ENCODE measurements at regions of chr5 and their contacts with region 1.

Region 1: GRCh38 chr5:140632150-140633020 is 590 bp downstream of the CD14 start:
- DNase-seq: peak; percentile 25 to 80 (median 47)
- ATAC-seq: peak; percentile 79
- H3K4me3 ChIP-seq: peak overlapping the region; percentile 72
- H3K4me3 Mint-ChIP-seq: peak overlapping the region; percentile 91
- H3K27ac ChIP-seq: no peak overlapping the region
- H3K27ac Mint-ChIP-seq: peak overlapping the region; percentile 79
- H3K4me1 ChIP-seq: peaks cover 23% of the 10 kb centered on the region
- H3K4me1 Mint-ChIP-seq: peaks cover 24% of the 10 kb centered on the region
- H3K27me3 ChIP-seq: no peaks in the 10 kb centered on the region
- H3K27me3 Mint-ChIP-seq: no peaks in the 10 kb centered on the region
- CTCF ChIP-seq: no peak

Region 2: GRCh38 chr5:140372971-140373487 is 259.4 kb before region 1 on chr5:
- CTCF ChIA-PET with region 1: no interaction called
- POLR2A ChIA-PET with region 1: no interaction called
- intact Hi-C with region 1: loop called (anchors 1 to 2 kb)
- DNase-seq: peak in 11 of 14 experiments; percentile 10 to 65 (median 22)
- ATAC-seq: peak; percentile 66
- H3K4me3 ChIP-seq: no peak overlapping the region
- H3K4me3 Mint-ChIP-seq: no peak overlapping the region
- H3K27ac ChIP-seq: no peak overlapping the region
- H3K27ac Mint-ChIP-seq: no peak overlapping the region
- H3K4me1 ChIP-seq: peaks cover 5% of the 10 kb centered on the region
- H3K4me1 Mint-ChIP-seq: no peaks in the 10 kb centered on the region
- H3K27me3 ChIP-seq: no peaks in the 10 kb centered on the region
- H3K27me3 Mint-ChIP-seq: no peaks in the 10 kb centered on the region
- CTCF ChIP-seq: peak; percentile 83

Region 3: DNA sequence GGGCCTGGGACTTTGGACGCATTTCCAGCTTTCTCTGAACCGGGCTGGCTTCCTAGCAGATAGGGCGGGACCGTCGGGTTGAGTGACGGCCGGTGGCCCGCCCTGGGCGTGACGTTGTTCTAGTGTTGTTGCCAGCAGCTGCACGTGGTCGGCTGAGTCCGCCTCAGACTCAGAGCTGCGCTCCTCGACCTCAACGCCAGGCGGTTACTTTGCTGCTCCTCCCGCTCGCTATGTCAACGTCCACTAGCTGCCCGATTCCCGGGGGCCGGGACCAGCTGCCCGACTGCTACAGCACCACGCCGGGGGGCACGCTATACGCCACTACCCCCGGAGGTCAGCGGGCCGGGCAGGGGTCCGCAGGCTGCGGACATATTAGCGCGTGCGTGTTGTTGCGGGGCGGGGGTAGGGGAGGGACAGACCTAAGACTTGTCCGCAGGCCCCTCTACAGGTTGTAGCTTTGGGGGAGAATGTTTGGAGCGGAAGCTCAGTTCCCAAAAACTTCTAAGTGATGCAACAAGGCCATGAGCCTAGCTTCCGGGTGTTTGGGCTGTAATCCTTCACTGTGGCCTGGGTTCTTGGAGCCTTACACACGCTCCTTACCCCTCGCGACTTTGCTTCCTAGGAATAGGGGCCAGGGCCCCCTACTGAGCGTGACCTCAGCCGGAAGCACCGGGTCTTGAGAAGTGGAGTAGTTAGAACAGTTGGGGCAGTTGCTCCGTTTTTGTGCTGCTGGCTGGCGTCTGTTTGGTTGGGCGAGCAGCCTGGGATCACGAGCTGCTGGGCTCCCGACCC is 84.7 kb before region 1 on chr5 and contains the start of gene EIF4EBP3:
- CTCF ChIA-PET with region 1: interaction called, 18 read pairs
- POLR2A ChIA-PET with region 1: interaction called, 34 read pairs
- intact Hi-C with region 1: loop called in 1 of 2 experiments (anchors 5 kb)
- DNase-seq: peak; percentile 79 to 95 (median 86)
- ATAC-seq: peak; percentile 97
- H3K4me3 ChIP-seq: peak within 1 kb of the TSS; percentile 79
- H3K4me3 Mint-ChIP-seq: peak within 1 kb of the TSS; percentile 96
- H3K27ac ChIP-seq: peak within 1 kb of the TSS; percentile 88 to 89
- H3K27ac Mint-ChIP-seq: peak within 1 kb of the TSS; percentile 96
- H3K4me1 ChIP-seq: peaks cover 31% of the 10 kb centered on the region
- H3K4me1 Mint-ChIP-seq: peaks cover 38% of the 10 kb centered on the region
- H3K27me3 ChIP-seq: no peaks in the 10 kb centered on the region
- H3K27me3 Mint-ChIP-seq: no peaks in the 10 kb centered on the region
- CTCF ChIP-seq: peak; percentile 72
- total RNA-seq, gene EIF4EBP3: 12.7 to 15.1 TPM

Region 4: DNA sequence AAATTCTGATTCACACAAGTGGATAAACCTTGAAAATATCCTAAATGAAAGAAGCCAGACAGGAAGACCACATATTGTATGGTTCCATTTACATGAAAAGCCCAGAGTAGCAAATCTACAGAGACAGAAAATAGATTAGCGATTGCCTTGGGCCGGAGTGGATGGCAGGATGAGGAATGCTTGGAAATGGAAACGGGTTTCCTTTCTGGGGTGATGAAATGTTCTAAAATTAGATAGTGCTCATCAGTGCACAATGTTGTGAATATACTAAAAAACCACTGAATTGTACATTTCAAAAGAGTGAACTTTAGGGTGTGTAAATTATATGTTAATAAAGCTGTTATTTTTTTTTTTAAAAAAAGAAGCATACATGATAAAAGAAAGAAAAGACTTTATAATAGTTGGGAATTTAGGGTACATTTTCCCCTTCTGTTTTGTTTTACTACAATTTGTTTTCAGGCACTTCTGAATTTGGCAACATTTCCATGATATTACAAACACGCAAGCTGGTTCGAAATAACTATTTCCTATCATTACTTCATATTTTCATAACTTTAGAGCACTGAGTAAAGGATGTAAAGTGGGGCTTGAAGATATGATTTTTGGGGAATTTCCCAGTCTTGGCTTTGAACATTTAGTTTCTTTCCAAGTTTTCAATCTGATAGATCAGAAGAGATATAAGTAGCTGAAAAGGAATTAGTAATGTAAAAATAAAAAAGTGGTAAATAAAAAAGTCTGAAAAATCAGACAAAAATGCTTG is 43.9 kb before region 1 on chr5:
- CTCF ChIA-PET with region 1: no interaction called
- POLR2A ChIA-PET with region 1: no interaction called
- intact Hi-C with region 1: loop called in 1 of 2 experiments (anchors 5 kb)
- DNase-seq: no peak
- ATAC-seq: no peak
- H3K4me3 ChIP-seq: no peak overlapping the region
- H3K4me3 Mint-ChIP-seq: no peak overlapping the region
- H3K27ac ChIP-seq: no peak overlapping the region
- H3K27ac Mint-ChIP-seq: no peak overlapping the region
- H3K4me1 ChIP-seq: no peaks in the 10 kb centered on the region
- H3K4me1 Mint-ChIP-seq: no peaks in the 10 kb centered on the region
- H3K27me3 ChIP-seq: no peaks in the 10 kb centered on the region
- H3K27me3 Mint-ChIP-seq: no peaks in the 10 kb centered on the region
- CTCF ChIP-seq: no peak

Measured in CD4-positive, alpha-beta T cell (primary cell).